Cardiac septum (tissue), 1 donor: ENCODE measurements at regions of chr3 and their contacts with region 1.

Region 1: DNA sequence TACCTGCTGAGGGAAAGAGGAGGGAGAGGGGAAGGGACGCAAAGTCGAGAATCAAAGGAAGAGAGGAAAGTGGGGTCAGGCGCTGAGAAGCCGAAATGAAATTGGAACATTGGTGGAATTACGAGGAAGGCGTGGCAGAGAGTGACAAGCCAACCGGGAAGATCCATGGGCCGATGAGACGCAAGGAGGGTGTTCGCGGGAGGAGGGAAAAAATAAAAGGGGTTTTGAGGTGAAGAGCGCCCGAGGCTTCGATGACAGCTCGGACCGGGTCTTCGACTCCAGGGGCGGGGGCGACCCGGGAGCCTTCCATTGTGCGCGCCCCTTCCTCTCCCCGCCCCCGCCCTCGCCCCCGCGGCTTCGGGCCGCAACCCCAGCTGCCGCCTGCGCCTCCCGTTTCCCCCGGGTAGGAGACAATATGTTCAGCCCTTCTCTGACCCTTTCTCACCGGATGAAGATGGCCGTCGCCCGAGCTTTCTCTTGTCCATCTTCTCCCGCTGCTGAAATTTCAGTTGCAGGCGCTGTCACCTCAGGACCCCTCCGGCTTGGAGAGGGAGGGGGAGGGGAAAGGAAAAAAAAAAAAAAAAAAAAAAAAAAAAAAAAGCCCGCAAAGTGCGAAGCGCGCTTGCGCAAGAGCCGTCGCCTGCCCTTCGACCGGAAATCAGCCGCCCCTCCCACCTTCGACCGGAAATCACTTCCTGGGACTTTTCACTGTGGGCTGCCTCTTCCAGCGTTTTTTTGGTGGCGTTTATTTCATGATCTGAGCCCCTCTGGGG is at the start of gene SENP7:
- DNase-seq: peak; percentile 87
- total RNA-seq, gene SENP7: 11.0 TPM

Region 2: GRCh38 chr3:101311676-101312075 is 201.2 kb before region 1 on chr3:
- intact Hi-C with region 1: no loop called
- DNase-seq: no peak

Region 3: DNA sequence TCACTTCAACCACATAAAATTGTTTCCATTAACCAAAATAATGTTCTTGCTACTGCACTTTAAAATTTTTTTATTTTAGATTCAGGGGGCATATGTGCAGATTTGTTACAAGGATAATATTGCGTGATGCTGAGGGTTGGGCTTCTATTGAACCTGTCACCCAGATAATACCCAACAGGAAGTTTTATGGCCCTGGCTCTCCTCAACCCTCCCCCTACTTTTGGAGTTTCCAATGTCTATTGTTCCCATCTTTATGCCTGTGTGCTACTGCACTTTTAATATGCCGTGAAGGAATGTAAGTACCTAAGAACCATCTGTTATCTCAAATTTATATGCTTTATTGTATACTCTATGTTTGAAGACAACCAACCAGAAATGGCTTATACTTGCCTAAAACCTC is 150.4 kb before region 1 on chr3:
- intact Hi-C with region 1: no loop called
- DNase-seq: no peak

Region 4: DNA sequence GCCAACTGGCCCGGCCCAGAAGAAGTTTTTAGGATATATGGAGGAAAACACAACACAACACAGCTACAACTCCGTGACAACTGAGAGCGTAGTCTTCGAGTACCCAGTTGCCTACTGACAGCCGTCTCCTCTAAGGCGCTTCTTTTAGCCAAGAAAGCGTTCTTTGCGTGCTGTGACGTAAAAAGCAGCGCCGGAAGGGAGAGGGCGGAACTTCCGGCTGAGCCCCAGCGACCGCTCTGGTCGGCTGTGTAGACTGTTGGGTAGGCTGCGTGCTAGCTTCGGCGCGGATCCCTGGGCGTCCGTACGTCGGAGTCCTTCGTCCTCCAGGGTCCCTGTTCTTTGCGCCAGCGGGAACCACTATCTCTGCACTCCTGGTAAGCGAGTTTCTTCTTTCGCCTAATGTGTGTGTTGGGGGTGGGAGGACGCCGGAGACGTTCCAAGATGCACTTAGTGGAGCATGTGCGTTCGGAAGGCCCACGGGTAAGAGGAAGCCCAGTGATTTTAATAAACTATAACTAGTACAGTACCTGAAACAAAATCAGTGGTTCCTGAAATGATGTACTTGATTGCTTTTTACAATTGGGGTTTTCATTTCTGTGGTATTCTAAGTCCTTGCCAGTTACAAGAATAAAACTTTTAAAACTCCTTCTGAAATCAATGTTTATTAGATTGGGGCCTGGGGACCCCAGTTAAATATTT is 48.9 kb after region 1 on chr3 and contains the start of gene TRMT10C:
- intact Hi-C with region 1: loop called (anchors 5 kb)
- DNase-seq: peak; percentile 97
- total RNA-seq, gene TRMT10C: 19.1 TPM

Region 5: DNA sequence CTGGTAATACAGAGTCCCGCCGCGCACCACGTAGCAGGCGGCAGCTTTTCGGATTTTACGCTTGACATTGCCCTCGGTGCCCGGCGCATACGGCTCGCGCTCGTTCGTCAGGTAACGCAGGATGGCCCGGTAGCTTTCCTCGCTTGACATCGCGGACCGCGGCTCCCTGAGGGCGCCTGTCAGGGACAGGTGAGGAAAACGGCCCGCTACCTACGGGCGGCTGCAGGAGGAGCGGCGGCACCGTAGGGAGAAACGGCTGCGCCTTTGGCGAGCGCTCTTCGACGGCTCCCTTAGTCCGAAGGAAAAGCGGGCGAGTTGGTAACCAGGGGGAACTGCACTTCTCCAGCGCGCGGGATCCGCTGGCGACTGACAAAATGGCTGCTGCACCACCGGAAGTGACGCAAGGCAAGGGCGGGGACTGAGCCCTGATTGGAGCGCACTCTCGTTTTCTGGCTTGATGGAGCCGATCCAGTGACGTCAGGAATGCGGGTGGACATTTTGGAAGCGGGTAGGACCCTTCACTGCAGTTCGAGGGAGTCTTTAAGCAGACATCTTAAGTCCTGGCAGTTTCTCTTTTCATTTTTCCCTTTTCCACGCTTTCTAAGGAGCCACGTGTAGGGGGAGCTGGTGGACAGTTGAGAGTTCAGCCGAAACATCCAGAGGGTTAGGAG is 164.1 kb after region 1 on chr3 and contains the start of gene ZBTB11:
- intact Hi-C with region 1: loop called (anchors 2 kb)
- DNase-seq: peak; percentile 100
- total RNA-seq, gene ZBTB11: 8.4 TPM